Activated naive CD4-positive, alpha-beta T cell treated with anti-CD3 and anti-CD28 coated beads for 36 hours (primary cell): ENCODE measurements at regions of chr2 and their contacts with region 1.

Region 1: DNA sequence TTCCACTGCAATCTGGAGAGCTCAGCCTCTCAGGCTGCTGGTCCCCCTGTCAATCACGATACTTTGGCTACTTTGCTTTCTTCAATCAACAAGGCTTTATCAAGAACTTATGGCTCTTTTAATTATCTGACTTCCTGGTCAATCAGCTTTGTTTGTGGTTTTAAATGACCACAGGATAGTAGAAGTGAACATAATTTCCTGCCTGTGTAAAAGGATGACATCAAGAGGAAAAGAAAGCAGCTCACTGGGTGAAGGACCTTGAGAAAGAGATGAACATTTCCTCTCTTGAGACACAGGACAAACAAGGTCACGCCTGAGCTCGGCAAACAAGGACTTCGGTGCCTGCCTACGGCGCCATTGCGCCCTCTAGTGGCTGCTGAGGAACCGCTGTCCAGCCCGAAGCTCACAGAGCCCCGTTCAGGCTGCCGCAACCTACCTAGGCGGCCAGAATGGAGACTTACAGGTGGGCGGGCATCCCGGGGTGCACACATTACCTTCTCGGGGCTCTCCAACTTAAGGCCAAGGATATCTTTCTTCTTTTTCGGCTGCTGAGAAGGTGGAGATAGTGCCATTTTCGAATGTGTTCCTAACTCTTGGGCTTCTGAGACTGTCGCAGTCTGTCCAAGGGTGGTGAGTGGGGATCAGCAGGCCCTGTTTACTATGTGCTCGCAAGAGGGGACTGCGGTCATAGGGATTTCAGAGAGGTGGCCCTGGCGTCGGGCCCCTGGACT is 54.0 kb downstream of the IL1RL2 start:
- DNase-seq: peak; percentile 92
- H3K4me3 Mint-ChIP-seq: no peak overlapping the region
- H3K27ac Mint-ChIP-seq: peak overlapping the region; percentile 7
- H3K4me1 Mint-ChIP-seq: peaks cover 31% of the 10 kb centered on the region
- H3K27me3 Mint-ChIP-seq: no peaks in the 10 kb centered on the region

Region 2: DNA sequence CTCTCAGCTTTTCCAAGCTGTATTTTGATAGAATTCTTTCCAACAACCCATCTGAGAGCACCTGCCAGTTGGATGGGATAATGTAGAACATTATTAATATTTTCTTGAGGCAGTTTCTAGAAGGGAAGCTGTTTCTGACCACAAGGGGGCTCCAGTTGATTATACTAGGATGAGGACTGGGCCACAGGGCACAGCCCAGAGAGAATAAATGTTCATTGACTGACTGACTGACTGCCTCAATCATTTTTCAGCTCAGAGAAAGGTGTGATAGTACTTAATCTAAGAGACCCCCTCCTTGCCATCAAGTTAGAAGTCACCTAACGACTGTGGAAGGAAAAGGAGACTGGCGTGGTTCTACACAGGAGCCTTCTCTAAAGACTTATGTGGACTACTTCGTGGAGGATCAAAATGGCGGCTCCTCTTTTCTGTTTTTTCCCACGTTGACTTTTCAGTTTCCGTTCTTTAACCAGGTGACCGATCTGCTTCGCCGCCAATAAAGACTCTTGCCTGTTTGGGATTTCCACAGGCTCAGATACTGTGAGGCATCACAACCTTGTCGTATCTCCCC is 821.6 kb before region 1 on chr2:
- CTCF ChIA-PET with region 1: no interaction called
- intact Hi-C with region 1: loop called (anchors 1 kb)
- DNase-seq: peak; percentile 82
- H3K4me3 Mint-ChIP-seq: no peak overlapping the region
- H3K27ac Mint-ChIP-seq: no peak overlapping the region
- H3K4me1 Mint-ChIP-seq: no peaks in the 10 kb centered on the region
- H3K27me3 Mint-ChIP-seq: no peaks in the 10 kb centered on the region

Region 3: DNA sequence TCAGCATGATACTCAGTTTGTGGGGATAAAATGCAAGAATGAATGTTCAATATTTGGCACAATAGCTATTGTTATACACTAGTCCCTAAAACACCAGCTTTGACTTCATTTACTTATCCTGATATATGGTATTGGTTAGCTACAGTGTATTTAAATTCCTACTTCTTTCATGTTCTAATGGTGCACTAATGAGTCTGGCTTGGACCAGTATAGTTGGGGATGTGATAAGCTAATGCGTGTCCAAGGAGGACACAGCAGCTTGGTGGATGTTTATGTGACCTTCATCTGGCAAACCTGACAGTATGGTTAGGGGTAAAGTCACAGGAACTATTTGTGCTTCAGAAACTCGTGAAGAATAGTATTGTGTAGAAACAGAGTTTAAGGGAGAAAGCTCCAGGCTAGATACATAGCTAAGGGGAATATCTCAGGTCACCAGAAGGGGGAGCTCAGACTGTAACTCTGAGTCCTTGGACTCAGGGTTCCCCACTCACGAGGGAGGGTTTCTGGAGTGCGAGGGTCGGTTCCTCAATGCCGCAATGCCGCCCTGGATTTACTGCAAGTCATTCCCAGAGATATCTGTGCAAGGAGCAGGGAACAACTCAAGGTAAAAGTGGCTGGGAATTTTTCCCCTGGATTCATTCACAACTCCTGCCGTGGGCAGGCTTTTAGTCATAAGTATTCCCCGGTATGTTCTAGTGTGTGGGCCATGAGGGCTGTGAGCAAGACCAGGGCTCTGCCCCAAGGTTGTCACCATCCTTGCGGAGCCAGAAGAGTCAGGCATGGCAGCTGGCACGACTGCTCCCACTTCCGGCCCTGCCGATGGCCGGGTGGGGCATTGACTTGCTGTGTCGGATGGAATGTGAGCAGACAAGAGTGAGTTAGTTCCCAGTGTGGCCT is 234.6 kb before region 1 on chr2:
- CTCF ChIA-PET with region 1: interaction called, 54 read pairs
- intact Hi-C with region 1: loop called (anchors 1 kb)
- DNase-seq: peak; percentile 68
- H3K4me3 Mint-ChIP-seq: no peak overlapping the region
- H3K27ac Mint-ChIP-seq: no peak overlapping the region
- H3K4me1 Mint-ChIP-seq: peaks cover 19% of the 10 kb centered on the region
- H3K27me3 Mint-ChIP-seq: no peaks in the 10 kb centered on the region

Region 4: GRCh38 chr2:102166189-102166845 is 74.5 kb before region 1 on chr2:
- CTCF ChIA-PET with region 1: interaction called, 16 read pairs
- intact Hi-C with region 1: loop called (anchors 1 kb)
- DNase-seq: peak; percentile 57
- H3K4me3 Mint-ChIP-seq: no peak overlapping the region
- H3K27ac Mint-ChIP-seq: no peak overlapping the region
- H3K4me1 Mint-ChIP-seq: peaks cover 9% of the 10 kb centered on the region
- H3K27me3 Mint-ChIP-seq: no peaks in the 10 kb centered on the region

Region 5: GRCh38 chr2:102251042-102251848 is 10.4 kb after region 1 on chr2:
- CTCF ChIA-PET with region 1: interaction called, 57 read pairs
- intact Hi-C with region 1: no loop called
- DNase-seq: peak; percentile 82
- H3K4me3 Mint-ChIP-seq: peak overlapping the region; percentile 77
- H3K27ac Mint-ChIP-seq: peak overlapping the region; percentile 69
- H3K4me1 Mint-ChIP-seq: peaks cover 37% of the 10 kb centered on the region
- H3K27me3 Mint-ChIP-seq: peaks cover 3% of the 10 kb centered on the region

Region 6: GRCh38 chr2:102449370-102449974 is 208.7 kb after region 1 on chr2:
- CTCF ChIA-PET with region 1: interaction called, 49 read pairs
- intact Hi-C with region 1: no loop called
- DNase-seq: peak; percentile 86
- H3K4me3 Mint-ChIP-seq: no peak overlapping the region
- H3K27ac Mint-ChIP-seq: no peak overlapping the region
- H3K4me1 Mint-ChIP-seq: peaks cover 2% of the 10 kb centered on the region
- H3K27me3 Mint-ChIP-seq: no peaks in the 10 kb centered on the region